Activated naive CD4-positive, alpha-beta T cell treated with anti-CD3 and anti-CD28 coated beads for 36 hours (primary cell): ENCODE measurements at regions of chr17 and their contacts with region 1.

Region 1: DNA sequence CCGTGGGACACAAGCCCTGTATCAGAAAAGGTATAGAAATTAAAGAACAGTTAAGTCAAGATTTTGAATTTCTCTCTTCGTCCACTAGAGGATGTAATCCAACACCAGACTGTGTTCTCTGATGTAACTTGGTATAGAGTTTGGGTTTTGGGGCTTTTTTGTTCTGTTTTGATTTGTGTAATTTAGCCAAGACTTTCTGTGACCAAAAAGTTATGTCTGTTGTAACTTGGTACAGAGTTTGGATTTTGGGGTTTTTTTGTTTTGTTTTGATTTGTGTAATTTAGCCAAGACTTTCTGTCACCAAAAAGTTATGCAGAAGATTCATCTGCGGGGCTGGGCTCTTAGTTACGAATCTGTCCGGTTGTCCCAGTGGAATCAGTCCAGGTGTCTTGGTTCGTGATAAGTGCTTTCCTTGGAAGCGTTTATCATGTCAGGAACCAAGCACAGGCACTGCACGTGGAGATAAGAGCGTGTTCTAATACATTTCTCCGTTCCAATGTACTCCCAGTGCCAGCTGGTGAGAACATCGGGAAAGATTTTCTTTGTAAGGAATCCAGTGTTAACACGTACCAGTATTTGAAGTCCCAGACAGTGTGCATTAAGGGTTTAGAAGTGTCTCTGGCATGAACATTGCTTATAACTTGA is 44.1 kb upstream of the SEC14L1 start:
- DNase-seq: no peak
- H3K4me3 Mint-ChIP-seq: no peak overlapping the region
- H3K27ac Mint-ChIP-seq: peak overlapping the region; percentile 80
- H3K4me1 Mint-ChIP-seq: peaks cover 46% of the 10 kb centered on the region
- H3K27me3 Mint-ChIP-seq: no peaks in the 10 kb centered on the region

Region 2: DNA sequence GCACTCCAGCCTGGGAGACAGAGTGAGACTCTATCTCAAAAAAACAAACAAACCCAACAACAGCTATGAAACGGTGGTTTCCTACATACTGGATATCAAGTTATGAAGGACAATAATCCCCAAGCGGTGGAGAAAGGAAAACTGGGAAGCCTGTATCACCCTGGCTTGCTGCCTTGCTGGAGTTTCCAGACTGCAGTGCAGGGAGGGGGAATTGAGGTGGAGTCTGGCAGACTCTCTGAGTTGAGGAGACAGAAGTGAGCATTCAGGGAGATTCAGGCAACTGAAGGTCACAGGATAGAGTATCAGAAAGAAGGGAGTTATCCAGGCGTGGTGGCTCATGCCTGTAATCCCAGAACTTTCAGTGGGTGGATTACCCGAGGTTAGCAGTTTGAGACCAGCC is 800.5 kb before region 1 on chr17:
- CTCF ChIA-PET with region 1: no interaction called
- intact Hi-C with region 1: no loop called
- DNase-seq: no peak
- H3K4me3 Mint-ChIP-seq: no peak overlapping the region
- H3K27ac Mint-ChIP-seq: no peak overlapping the region
- H3K4me1 Mint-ChIP-seq: peaks cover 2% of the 10 kb centered on the region
- H3K27me3 Mint-ChIP-seq: no peaks in the 10 kb centered on the region

Region 3: DNA sequence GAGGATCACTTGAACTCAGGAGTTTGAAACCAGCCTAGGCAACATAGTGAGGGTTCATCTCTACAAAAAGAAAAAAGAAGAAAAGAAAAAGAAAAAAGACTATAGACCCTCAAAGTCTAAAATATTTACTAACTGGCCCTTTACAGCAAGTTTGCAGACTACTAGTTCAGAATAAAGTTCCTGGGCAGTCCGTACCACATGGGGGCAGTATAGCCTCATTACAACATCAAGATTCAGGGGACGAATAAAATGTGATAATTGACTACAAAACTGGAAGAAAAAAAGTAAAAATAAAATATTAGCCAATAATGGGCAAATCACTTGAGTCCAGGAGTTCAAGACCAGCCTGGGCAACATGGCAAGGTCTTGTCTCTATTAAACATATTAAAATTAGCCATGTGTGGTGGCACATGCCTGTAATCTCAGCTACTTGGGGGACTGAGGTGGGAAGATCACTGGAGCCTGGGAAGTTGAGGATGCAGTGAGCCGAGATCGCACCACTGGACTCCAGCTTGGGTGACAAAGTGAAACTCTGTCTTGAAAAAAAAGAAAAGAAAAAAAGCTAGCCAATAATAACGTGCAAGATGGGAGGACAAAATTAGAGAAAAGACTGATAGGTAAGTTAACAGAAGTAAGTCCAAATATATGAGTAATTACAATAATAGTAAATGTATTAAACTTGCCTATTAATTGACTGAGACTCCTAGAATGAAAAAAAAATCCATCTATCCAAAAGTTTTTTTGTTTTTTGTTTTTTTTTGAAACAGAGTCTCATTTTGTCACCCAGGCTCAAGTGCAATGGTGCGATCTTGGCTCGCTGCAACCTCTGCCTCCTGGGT is 85.3 kb before region 1 on chr17:
- CTCF ChIA-PET with region 1: no interaction called
- intact Hi-C with region 1: no loop called
- DNase-seq: peak; percentile 79
- H3K4me3 Mint-ChIP-seq: no peak overlapping the region
- H3K27ac Mint-ChIP-seq: no peak overlapping the region
- H3K4me1 Mint-ChIP-seq: no peaks in the 10 kb centered on the region
- H3K27me3 Mint-ChIP-seq: no peaks in the 10 kb centered on the region

Region 4: DNA sequence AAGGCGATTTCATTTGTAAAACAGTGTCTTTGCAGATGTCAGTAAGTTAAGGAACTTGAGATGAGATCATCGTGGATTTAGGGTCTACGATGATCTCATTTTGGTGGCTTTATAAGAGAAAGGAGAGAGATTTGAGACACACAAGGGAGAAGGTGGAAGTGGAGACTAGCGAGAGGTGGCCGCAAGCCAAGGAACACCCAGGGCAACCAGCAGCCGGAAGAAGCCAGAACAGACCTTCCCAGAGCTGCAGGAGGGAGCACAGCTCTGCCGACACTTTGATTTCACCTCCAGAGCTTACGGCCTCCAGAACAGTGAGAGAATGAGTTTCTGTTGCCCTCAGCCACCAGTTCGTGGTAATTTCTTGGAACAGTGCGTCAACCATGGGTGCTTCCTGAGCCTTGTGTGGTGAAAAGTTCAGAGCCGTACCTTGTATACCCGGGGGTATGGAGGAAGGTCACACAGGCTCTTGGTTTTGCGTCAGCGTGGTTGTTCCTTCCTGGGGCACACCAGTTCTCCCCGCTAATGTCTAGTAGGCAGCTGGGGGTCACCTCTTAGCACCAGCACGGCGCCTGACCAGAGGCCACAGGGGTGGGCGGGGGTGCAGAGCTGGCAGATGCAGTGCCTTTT is 31.2 kb after region 1 on chr17:
- CTCF ChIA-PET with region 1: interaction called, 3 read pairs
- intact Hi-C with region 1: loop called (anchors 2 kb)
- DNase-seq: peak; percentile 83
- H3K4me3 Mint-ChIP-seq: peak overlapping the region; percentile 67
- H3K27ac Mint-ChIP-seq: peak overlapping the region; percentile 90
- H3K4me1 Mint-ChIP-seq: peaks cover 26% of the 10 kb centered on the region
- H3K27me3 Mint-ChIP-seq: no peaks in the 10 kb centered on the region

Region 5: DNA sequence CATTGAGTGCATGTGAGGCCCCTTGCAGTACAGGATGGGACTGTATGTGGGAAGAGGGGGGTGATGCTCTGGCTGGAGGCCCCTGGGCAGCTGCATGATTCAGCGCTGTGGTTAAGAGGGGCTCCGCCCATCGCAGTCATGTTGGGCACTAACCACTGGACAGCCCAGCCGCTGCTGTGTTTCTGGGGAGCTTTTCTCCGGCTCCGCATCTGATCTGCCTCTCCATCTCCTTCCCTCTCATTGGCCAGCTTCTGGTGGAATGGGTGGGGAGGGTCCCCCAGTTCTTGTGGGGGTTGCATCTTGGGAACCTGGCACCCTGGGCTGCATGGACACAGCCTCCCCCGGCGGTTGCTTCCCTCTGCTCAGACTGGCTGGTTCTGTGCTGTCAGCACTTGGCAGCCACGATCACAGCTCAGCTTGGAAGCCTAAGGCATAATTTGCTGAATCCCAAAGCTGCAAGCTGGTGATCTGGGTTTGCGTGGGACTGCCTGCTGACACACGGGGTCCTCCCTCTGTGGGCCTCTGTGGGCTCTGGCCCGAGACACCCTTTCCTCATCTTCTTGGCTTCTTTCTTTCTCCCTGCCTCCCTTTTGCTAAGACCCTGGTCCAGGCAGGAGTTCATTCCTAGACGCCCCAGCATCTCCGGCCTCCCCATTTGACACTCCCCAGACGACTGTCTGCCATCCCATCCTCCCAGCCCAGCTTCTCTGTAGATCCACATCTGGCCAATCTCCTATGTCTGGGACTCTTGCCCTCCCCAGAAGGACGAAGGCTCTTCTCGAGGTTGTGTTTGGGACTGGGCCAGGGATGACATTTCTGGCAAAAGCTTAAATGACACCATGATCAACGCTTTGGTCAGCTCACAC is 212.4 kb after region 1 on chr17:
- CTCF ChIA-PET with region 1: no interaction called
- intact Hi-C with region 1: no loop called
- DNase-seq: no peak
- H3K4me3 Mint-ChIP-seq: no peak overlapping the region
- H3K27ac Mint-ChIP-seq: no peak overlapping the region
- H3K4me1 Mint-ChIP-seq: no peaks in the 10 kb centered on the region
- H3K27me3 Mint-ChIP-seq: no peaks in the 10 kb centered on the region